ENCODE measurements at regions of chr5 and their contacts with region 1.

Region 1: GRCh38 chr5:96934708-96935558 is 947 bp upstream of the LNPEP start:
- DNase-seq: peak; percentile 97
- ATAC-seq: peak; percentile 74
- H3K4me3 ChIP-seq: peak overlapping the region; percentile 76
- H3K27ac ChIP-seq: peak overlapping the region; percentile 86
- H3K4me1 ChIP-seq: peaks cover 35% of the 10 kb centered on the region
- H3K27me3 ChIP-seq: no peaks in the 10 kb centered on the region
- CTCF ChIP-seq: no peak

Region 2: DNA sequence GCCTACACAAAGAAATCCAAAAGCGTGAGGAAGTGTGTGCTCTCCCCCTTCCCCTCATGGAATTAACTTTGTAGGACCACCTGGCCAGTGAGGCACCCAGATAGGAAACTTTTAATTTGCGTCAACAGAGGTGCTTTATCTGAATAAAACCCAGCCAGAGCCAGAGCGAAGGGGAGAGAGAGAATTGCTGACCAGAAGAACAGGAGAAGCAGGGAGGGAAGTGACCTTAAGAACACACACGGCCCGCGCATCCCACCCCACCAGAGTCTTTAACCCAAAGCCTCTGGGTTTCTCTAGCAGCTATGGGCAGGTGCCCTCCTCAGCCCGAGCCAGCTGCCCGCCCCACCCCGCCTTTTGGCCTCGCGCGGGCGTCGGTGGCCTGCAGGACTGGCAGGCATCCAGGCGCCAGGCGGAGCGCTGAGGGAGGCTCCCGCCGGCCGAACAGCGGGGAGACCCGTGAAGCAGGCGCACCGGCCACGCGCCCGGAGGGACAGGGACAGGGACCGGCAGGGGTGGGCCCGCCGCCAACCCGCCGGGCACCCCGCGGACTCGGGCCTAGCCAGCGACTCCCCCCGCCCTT is 127.8 kb before region 1 on chr5:
- CTCF ChIA-PET with region 1: no interaction called
- POLR2A ChIA-PET with region 1: interaction called, 5 read pairs
- intact Hi-C with region 1: loop called (anchors 1 kb)
- DNase-seq: peak; percentile 86
- ATAC-seq: peak; percentile 66
- H3K4me3 ChIP-seq: peak overlapping the region; percentile 90
- H3K27ac ChIP-seq: peak overlapping the region; percentile 88
- H3K4me1 ChIP-seq: peaks cover 10% of the 10 kb centered on the region
- H3K27me3 ChIP-seq: no peaks in the 10 kb centered on the region
- CTCF ChIP-seq: no peak

Region 3: DNA sequence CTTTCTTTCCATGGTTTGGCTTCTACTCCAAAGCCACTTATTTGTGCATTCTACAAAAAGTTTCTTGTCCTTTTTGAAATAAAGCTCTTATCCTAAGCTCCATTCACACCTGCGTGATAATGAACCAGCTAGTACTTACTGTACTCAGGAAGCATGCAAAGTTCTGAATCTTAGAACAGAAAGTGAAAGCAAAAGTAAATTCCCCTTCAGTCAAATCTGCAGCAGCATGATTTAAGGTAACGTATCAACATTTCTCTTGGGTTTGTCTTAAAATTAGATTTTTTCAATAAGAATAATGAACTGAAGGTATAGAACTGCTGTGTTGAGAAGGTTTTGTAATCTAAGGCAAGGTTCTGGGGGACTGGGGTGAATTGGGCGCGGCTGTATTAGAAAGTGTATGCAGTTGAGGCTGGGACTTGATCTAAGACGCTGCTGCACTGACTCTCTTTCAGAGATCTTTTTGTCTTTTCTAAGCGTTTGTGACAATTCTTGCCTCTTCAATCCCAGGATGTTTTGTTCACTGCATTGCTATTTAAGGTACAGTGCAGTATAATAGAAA is 58.6 kb before region 1 on chr5 and contains the start of gene ERAP2:
- CTCF ChIA-PET with region 1: no interaction called
- POLR2A ChIA-PET with region 1: no interaction called
- intact Hi-C with region 1: loop called (anchors 1 kb)
- DNase-seq: peak; percentile 59
- ATAC-seq: peak; percentile 43
- H3K4me3 ChIP-seq: peak within 1 kb of the TSS; percentile 83
- H3K27ac ChIP-seq: peak within 1 kb of the TSS; percentile 42
- H3K4me1 ChIP-seq: peaks cover 26% of the 10 kb centered on the region
- H3K27me3 ChIP-seq: no peaks in the 10 kb centered on the region
- CTCF ChIP-seq: no peak
- total RNA-seq, gene ERAP2: 9.6 and 12.0 TPM in 2 replicates

Region 4: DNA sequence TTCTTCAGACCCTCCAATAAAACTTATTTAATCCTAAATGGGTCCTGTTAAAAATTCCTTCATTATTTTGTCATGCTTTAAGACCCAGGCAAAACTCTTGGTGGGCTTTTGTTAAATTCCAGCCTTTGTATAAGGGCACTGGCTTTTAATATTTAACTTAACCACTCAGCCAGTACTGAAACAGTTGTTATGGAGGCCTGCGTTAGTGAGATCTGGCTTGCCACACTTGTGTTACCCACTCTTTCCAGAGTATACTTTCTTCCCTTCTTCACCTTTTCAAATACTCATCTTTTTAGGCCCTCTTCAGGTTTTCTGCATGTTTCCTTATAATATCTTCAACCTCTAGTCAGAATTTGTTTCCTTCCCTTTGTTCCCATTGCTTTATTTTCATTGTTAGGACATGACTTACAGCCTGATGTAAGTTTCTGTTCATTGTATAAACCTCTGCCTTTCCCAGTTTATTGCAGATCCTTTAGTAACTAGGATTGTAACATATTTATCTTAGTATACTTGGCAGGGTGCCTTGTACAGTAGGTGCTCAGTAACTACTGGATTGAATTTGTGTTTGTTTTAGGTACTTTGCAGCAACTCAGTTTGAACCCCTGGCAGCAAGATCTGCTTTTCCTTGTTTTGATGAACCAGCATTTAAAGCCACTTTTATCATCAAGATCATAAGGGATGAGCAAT is 49.7 kb after region 1 on chr5:
- CTCF ChIA-PET with region 1: no interaction called
- POLR2A ChIA-PET with region 1: no interaction called
- intact Hi-C with region 1: loop called (anchors 5 kb)
- DNase-seq: peak; percentile 15
- ATAC-seq: peak; percentile 84
- H3K4me3 ChIP-seq: no peak overlapping the region
- H3K27ac ChIP-seq: no peak overlapping the region
- H3K4me1 ChIP-seq: no peaks in the 10 kb centered on the region; the same call in 1 of the 2 replicates
- H3K27me3 ChIP-seq: no peaks in the 10 kb centered on the region
- CTCF ChIP-seq: no peak

Region 5: DNA sequence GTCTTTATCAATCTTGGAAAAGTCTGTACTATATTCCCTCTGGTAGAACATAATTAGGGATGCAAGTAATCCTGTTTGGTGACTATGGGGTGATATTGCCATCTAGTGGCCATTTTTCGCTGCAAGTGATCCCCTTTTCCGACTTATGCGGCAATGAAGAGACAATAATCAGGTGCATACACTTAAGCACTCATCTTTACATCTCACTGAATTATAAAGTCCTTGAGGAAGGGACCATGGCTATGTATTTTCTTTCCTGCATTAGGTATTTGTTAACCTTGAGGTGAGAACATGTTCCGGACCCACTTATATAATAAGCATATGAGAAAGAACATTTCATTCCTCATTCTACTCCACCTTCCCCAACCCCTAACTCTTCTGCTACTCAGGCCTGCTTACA is 227.1 kb after region 1 on chr5:
- CTCF ChIA-PET with region 1: no interaction called
- POLR2A ChIA-PET with region 1: no interaction called
- intact Hi-C with region 1: loop called (anchors 5 kb)
- DNase-seq: peak; percentile 87
- ATAC-seq: peak; percentile 84
- H3K4me3 ChIP-seq: no peak overlapping the region
- H3K27ac ChIP-seq: no peak overlapping the region
- H3K4me1 ChIP-seq: 0 out of 2 replicates have a peak, but pooled peaks cover 4% of the 10 kb centered on the region
- H3K27me3 ChIP-seq: no peaks in the 10 kb centered on the region
- CTCF ChIP-seq: peak; percentile 94

Measured in PC-3 (cell line).